MCF 10A (cell line): ENCODE measurements at regions of chr9 and their contacts with region 1.

Region 1: GRCh38 chr9:126781186-126782052 is 23.4 kb upstream of the ZBTB43 start:
- DNase-seq: peak; percentile 79
- H3K4me3 Mint-ChIP-seq: no peak overlapping the region
- H3K27ac Mint-ChIP-seq: no peak overlapping the region
- H3K4me1 Mint-ChIP-seq: peaks cover 5% of the 10 kb centered on the region
- H3K27me3 Mint-ChIP-seq: no peaks in the 10 kb centered on the region
- CTCF ChIP-seq: peak; percentile 97

Region 2: DNA sequence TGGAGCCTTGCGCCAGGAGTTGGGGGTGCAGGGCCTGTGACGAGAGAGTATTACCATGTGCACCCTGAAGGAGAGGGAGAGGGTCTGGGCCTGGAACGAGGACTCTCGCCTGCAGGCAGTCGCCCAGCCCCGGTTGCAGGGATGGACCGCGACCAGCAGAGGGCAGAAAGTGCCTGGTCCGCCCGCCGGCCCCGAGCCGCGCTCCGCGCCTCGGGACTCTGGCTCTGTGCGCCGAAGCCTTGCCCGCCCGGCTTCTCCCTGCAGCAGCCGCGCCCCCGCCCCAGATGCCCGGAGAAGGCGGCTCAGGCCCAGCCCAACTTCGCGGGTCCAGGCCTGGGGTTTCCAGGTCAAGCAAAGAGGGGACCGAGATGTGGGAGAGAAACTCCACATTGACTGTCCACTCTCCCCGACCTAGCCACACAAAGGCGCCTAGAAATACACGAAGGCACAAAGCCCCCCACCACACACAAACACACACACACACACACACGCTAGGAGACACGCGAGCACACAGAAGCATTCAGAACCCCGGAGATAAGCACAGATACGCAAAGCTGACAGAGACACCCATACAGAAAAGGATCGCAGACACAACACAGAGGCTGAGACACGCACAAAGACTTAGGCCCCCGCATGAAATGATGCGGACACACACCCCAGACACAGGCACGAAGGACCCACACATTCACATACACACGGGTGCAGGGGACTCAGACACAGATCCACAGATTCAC is 169.7 kb before region 1 on chr9:
- CTCF ChIA-PET with region 1: interaction called, 6 read pairs
- POLR2A ChIA-PET with region 1: interaction called, 3 read pairs
- intact Hi-C with region 1: loop called (anchors 1 kb)
- DNase-seq: peak; percentile 64
- H3K4me3 Mint-ChIP-seq: peak overlapping the region; percentile 2
- H3K27ac Mint-ChIP-seq: no peak overlapping the region
- H3K4me1 Mint-ChIP-seq: peaks cover 11% of the 10 kb centered on the region
- H3K27me3 Mint-ChIP-seq: peaks cover 14% of the 10 kb centered on the region
- CTCF ChIP-seq: peak; percentile 83

Region 3: DNA sequence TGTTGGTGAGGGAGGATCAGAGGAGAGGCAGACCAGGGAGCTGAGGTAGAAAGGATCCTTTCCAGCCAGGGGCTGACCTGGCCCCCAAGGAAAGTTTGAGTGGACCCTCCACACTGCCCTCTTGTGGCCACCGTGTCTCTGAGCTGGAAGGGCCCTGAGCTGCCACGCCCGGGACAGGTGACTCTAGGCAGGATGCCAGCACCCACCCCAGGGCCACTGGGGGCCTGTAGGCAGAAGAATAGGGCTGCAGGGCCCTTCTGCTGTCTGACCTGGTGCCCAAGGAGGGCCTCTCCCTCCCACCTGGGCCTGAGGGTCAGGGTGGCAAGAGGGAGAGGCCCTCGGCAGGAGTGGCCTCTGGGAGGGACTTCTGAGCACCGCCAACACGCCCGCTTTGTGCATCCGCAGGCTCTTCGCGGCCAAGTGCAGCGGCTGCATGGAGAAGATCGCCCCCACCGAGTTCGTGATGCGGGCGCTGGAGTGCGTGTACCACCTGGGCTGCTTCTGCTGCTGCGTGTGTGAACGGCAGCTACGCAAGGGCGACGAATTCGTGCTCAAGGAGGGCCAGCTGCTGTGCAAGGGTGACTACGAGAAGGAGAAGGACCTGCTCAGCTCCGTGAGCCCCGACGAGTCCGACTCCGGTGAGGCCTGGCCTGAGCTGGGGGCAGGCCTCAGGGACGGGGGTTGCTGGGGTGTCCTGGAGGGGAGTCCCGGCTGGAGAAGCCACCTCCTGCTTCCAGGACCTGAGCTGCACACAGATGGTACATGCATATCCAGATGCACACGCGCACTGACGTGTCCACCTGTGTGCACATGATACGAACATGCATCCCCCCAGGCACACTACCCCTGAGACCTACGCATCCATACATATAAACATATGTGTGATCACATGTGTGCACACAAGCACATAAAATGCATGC is 90.7 kb before region 1 on chr9:
- CTCF ChIA-PET with region 1: interaction called, 13 read pairs
- POLR2A ChIA-PET with region 1: no interaction called
- intact Hi-C with region 1: no loop called
- DNase-seq: peak; percentile 54
- H3K4me3 Mint-ChIP-seq: no peak overlapping the region
- H3K27ac Mint-ChIP-seq: no peak overlapping the region
- H3K4me1 Mint-ChIP-seq: no peaks in the 10 kb centered on the region
- H3K27me3 Mint-ChIP-seq: no peaks in the 10 kb centered on the region
- CTCF ChIP-seq: peak; percentile 77

Region 4: DNA sequence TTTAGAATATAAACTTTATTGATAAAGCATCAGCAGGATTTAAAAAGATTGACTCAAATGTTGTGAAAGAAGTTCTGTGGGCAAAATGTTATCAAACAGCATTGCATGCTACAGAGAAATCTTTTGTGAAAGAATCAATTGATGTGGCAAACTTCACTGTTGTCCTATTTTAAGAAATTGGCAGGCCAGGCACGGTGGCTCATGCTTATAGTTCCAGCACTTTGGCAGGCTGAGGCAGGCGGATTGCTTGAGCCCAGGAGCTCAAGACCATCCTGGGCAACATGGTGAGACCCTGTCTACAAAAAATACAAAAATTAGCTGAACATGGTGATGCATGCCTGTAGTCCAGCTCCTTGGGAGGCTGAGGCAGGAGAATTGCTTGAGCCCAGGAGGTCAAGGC is 40.9 kb after region 1 on chr9:
- CTCF ChIA-PET with region 1: no interaction called
- POLR2A ChIA-PET with region 1: no interaction called
- intact Hi-C with region 1: no loop called
- DNase-seq: no peak
- H3K4me3 Mint-ChIP-seq: no peak overlapping the region
- H3K27ac Mint-ChIP-seq: no peak overlapping the region
- H3K4me1 Mint-ChIP-seq: no peaks in the 10 kb centered on the region
- H3K27me3 Mint-ChIP-seq: no peaks in the 10 kb centered on the region
- CTCF ChIP-seq: no peak

Region 5: GRCh38 chr9:127065592-127065991 is 284.2 kb after region 1 on chr9:
- CTCF ChIA-PET with region 1: no interaction called
- POLR2A ChIA-PET with region 1: no interaction called
- intact Hi-C with region 1: no loop called
- DNase-seq: peak; percentile 39
- H3K4me3 Mint-ChIP-seq: no peak overlapping the region
- H3K27ac Mint-ChIP-seq: no peak overlapping the region
- H3K4me1 Mint-ChIP-seq: no peaks in the 10 kb centered on the region
- H3K27me3 Mint-ChIP-seq: no peaks in the 10 kb centered on the region
- CTCF ChIP-seq: no peak